ENCODE measurements at regions of chr11 and their contacts with region 1.

Region 1: DNA sequence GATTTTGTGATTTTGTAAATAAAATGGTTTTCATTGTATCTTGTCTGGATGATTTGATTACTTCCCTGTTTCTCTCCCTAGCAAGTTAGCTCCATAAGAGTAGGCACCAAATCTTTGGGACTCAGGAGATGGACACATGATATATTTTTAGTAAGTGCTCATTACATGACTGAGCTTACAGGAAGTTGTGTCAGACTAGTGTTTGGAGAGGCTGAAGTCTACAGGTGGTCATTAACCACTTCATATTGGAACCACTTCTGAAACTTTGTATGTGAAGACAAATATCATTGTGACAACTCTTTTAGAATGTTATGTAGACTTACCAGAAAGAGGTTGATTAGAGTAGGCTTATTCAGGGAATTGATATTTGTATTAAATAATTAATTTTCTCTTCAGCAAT is 19.1 kb downstream of the ARHGAP42 start:
- DNase-seq: no peak
- ATAC-seq: peak; percentile 81
- H3K4me3 ChIP-seq: no peak overlapping the region
- H3K27ac ChIP-seq: no peak overlapping the region
- H3K4me1 ChIP-seq: peaks cover 25% of the 10 kb centered on the region
- H3K27me3 ChIP-seq: no peaks in the 10 kb centered on the region
- CTCF ChIP-seq: no peak
- EP300 ChIP-seq: no peak
- POLR2A ChIP-seq: no peak
- RAD21 ChIP-seq: no peak

Region 2: DNA sequence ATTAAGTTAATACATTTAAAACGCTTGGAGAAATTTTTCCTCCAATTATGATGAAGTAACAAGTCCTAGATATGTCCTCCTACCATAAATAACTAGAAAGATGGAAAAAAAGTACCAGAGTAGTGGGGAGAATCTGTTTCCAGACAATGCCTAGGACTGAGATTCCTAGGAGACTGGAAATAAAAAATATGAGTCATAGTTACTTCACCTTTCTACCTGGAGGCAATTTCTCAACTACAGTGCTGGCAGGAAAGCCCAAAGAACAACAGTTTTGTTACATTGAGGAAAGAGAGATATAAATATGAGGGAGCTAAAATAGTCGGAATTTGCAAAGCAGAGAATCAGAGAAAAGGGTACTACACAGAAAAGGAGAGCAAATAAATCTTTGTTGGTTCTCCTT is 221.2 kb before region 1 on chr11:
- CTCF ChIA-PET with region 1: no interaction called
- POLR2A ChIA-PET with region 1: no interaction called
- RAD21 ChIA-PET with region 1: no interaction called
- SMC1A ChIA-PET with region 1: no interaction called
- in situ Hi-C with region 1: no loop called
- intact Hi-C with region 1: no loop called
- DNase-seq: no peak
- ATAC-seq: no peak
- H3K4me3 ChIP-seq: no peak overlapping the region
- H3K27ac ChIP-seq: no peak overlapping the region
- H3K4me1 ChIP-seq: no peaks in the 10 kb centered on the region
- H3K27me3 ChIP-seq: no peaks in the 10 kb centered on the region
- CTCF ChIP-seq: no peak
- EP300 ChIP-seq: no peak
- POLR2A ChIP-seq: no peak
- RAD21 ChIP-seq: no peak

Region 3: DNA sequence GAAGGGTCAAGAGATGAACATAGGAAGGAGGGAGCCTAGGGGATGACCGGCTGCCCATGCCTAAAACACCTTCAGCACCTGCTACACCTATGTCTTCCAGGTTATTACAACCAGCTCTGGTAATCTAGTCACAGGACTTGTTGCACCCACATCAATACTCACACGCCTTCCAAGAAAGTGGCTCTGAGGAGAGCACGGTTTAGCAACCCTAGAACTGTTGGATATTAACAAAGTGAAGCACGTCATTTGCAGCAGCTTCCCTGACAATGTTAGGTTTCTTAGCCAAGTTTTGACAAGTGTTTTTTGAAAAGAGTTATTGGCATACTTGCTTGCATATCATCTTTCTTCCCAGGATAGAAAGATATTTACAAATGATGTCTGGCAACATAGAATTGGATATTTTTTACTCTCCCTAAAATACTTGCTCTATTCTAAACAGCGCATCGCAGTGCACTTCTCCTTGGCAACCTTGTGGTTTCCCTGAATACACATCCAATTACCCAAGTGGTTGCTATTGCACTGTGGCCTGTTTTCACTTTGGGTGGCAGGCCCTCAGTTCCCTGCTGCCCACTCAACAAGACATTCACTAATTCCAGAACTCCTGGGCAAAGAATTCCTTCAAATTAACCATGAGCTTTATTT is 113.4 kb before region 1 on chr11:
- CTCF ChIA-PET with region 1: no interaction called
- POLR2A ChIA-PET with region 1: no interaction called
- RAD21 ChIA-PET with region 1: no interaction called
- SMC1A ChIA-PET with region 1: no interaction called
- in situ Hi-C with region 1: no loop called
- intact Hi-C with region 1: no loop called
- DNase-seq: no peak
- ATAC-seq: no peak
- H3K4me3 ChIP-seq: no peak overlapping the region
- H3K27ac ChIP-seq: no peak overlapping the region
- H3K4me1 ChIP-seq: no peaks in the 10 kb centered on the region
- H3K27me3 ChIP-seq: peaks cover 0 to 5% of the 10 kb centered on the region in 2 experiments; a peak in 1 of 4 replicates
- CTCF ChIP-seq: no peak
- EP300 ChIP-seq: no peak
- POLR2A ChIP-seq: no peak
- RAD21 ChIP-seq: no peak

Region 4: GRCh38 chr11:100687630-100688395 is 18.4 kb before region 1 on chr11:
- CTCF ChIA-PET with region 1: interaction called, 23 read pairs
- POLR2A ChIA-PET with region 1: interaction called, 3 read pairs
- RAD21 ChIA-PET with region 1: no interaction called
- SMC1A ChIA-PET with region 1: interaction called, 6 read pairs
- in situ Hi-C with region 1: no loop called
- intact Hi-C with region 1: no loop called
- DNase-seq: no peak
- ATAC-seq: peak; percentile 73
- H3K4me3 ChIP-seq: peak overlapping the region; percentile 96
- H3K27ac ChIP-seq: peak overlapping the region; percentile 74
- H3K4me1 ChIP-seq: peaks cover 28% of the 10 kb centered on the region
- H3K27me3 ChIP-seq: no peaks in the 10 kb centered on the region
- CTCF ChIP-seq: peak; percentile 65 to 72 (median 70); a peak in 5 of 6 replicates
- EP300 ChIP-seq: no peak
- POLR2A ChIP-seq: no peak
- RAD21 ChIP-seq: peak; percentile 42

Measured in GM12878 (cell line).